ENCODE measurements at regions of chr17 and their contacts with region 1.

Region 1: DNA sequence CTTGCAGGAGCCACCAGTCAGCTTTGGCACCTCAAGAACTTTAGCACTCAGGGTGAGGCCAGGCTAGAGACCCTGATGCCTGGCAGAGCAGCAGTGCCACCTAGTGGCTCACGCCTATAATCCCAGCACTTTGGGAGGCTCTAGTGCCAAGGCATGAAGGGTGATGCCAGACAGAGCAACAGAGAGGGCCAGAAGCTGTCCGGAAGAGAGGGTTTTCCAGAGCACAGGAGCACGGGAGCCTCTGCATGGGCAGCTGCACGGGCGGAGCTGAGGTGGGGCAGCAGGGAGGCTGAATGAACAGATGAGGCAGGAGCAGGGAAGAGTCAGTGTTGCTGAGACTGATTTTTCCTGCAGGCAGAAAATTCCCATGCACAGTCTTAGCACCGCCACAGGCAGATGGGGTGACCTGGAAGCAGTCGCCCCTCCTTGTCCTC is 38.9 kb downstream of the MYH3 start:
- DNase-seq: peak; percentile 72
- ATAC-seq: peak; percentile 83
- H3K4me3 Mint-ChIP-seq: no peak overlapping the region
- H3K27ac Mint-ChIP-seq: no peak overlapping the region
- H3K4me1 Mint-ChIP-seq: no peaks in the 10 kb centered on the region
- H3K27me3 Mint-ChIP-seq: no peaks in the 10 kb centered on the region

Region 2: DNA sequence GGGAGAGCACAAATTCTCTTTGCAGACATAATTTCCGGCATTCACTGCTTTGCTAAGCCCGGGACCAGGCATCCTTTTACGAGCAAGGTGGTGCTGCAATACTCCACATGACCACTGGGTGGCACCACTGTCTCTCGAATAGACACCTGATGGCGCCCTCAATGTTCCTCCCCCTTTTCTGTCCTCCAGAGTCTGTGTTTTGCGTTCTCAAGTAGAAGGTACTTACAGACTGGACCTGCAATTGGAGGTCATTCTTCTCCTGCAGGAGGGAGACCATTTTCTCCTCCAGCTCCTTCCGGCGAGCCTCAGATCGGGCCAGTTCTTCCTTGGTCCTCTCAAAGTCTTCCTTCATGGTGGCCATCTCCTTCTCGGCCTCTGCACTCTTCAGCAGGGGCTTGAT is 290.6 kb before region 1 on chr17:
- CTCF ChIA-PET with region 1: interaction called, 67 read pairs
- POLR2A ChIA-PET with region 1: no interaction called
- DNase-seq: peak; percentile 84
- ATAC-seq: peak; percentile 78
- H3K4me3 Mint-ChIP-seq: no peak overlapping the region
- H3K27ac Mint-ChIP-seq: no peak overlapping the region
- H3K4me1 Mint-ChIP-seq: no peaks in the 10 kb centered on the region
- H3K27me3 Mint-ChIP-seq: no peaks in the 10 kb centered on the region

Region 3: GRCh38 chr17:10384175-10384574 is 234.0 kb before region 1 on chr17:
- CTCF ChIA-PET with region 1: no interaction called
- POLR2A ChIA-PET with region 1: no interaction called
- DNase-seq: no peak
- ATAC-seq: no peak
- H3K4me3 Mint-ChIP-seq: no peak overlapping the region
- H3K27ac Mint-ChIP-seq: no peak overlapping the region
- H3K4me1 Mint-ChIP-seq: no peaks in the 10 kb centered on the region
- H3K27me3 Mint-ChIP-seq: peaks cover 4% of the 10 kb centered on the region

Region 4: DNA sequence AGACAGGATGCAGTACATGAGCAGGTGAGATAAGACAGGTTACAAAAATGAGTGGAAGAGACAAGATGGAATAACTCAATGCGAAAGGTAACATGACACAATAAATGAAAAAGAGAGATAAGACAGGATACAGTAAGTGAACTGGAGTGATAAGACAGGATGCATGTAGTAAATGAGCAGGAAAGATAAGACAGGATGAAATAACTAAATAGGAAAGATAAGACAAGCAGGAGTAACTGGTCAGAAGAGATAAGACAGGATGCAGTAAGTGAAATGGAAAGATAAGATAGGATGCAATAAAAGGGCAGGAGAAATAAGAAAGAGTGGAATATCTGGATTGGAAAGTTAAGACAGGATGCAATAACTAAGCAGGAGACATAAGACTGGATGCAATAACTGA is 140.5 kb before region 1 on chr17:
- CTCF ChIA-PET with region 1: no interaction called
- POLR2A ChIA-PET with region 1: no interaction called
- DNase-seq: no peak
- ATAC-seq: no peak
- H3K4me3 Mint-ChIP-seq: no peak overlapping the region
- H3K27ac Mint-ChIP-seq: no peak overlapping the region
- H3K4me1 Mint-ChIP-seq: no peaks in the 10 kb centered on the region
- H3K27me3 Mint-ChIP-seq: no peaks in the 10 kb centered on the region

Region 5: GRCh38 chr17:10600571-10600970 is 17.6 kb before region 1 on chr17:
- CTCF ChIA-PET with region 1: interaction called, 30 read pairs
- POLR2A ChIA-PET with region 1: no interaction called
- DNase-seq: no peak
- ATAC-seq: no peak
- H3K4me3 Mint-ChIP-seq: no peak overlapping the region
- H3K27ac Mint-ChIP-seq: no peak overlapping the region
- H3K4me1 Mint-ChIP-seq: no peaks in the 10 kb centered on the region
- H3K27me3 Mint-ChIP-seq: no peaks in the 10 kb centered on the region

Region 6: DNA sequence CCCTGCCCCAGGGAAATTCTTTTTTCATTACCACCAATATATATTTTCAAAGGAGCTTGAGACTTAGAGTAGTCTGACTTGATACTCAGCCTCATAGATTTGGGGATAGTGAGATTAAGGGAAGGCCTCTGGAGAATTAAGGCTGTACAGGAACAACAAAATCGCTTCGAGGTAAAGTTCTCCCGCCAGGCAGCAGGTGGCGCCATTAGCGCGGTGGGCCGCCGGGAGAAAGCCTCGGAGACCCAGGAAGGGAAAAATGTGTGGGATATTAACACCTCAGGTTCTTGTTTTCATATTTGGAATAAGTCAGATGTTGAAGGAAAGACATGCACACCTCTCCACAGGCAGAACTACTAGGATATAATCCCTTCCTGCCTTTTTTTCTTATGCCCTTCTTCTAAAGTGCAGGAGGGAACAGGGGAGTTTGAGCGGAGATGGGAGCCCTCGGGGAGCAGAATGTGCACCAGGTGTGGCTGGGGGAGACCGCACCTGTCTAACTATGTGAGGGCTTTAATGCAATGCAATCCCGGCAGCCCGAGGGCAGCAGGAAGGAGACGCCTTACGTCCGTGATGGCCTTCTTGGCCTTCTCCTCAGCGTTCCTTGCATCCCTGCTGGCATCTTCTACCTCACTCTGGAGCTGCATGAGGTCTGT is 13.0 kb after region 1 on chr17:
- CTCF ChIA-PET with region 1: interaction called, 80 read pairs
- POLR2A ChIA-PET with region 1: no interaction called
- DNase-seq: peak; percentile 28
- ATAC-seq: no peak
- H3K4me3 Mint-ChIP-seq: no peak overlapping the region
- H3K27ac Mint-ChIP-seq: no peak overlapping the region
- H3K4me1 Mint-ChIP-seq: peaks cover 3% of the 10 kb centered on the region
- H3K27me3 Mint-ChIP-seq: no peaks in the 10 kb centered on the region

Measured in activated CD8-positive, alpha-beta T cell treated with anti-CD3 and anti-CD28 coated beads, Interleukin-2, amount 10 ng/mL, durations not matched to agents 7 days and 5 days (primary cell).